SK-N-SH (cell line): ENCODE measurements at regions of chr11 and their contacts with region 1.

Region 1: GRCh38 chr11:25981998-25982397 is 349.9 kb upstream of the ANO3 start:
- DNase-seq: peak; percentile 30
- H3K4me3 ChIP-seq: no peak overlapping the region
- H3K27ac ChIP-seq: no peak overlapping the region
- H3K4me1 ChIP-seq: no peaks in the 10 kb centered on the region; a peak in 1 of 4 replicates
- H3K27me3 ChIP-seq: no peaks in the 10 kb centered on the region
- CTCF ChIP-seq: peak; percentile 73
- EP300 ChIP-seq: no peak
- RAD21 ChIP-seq: peak; percentile 96

Region 2: DNA sequence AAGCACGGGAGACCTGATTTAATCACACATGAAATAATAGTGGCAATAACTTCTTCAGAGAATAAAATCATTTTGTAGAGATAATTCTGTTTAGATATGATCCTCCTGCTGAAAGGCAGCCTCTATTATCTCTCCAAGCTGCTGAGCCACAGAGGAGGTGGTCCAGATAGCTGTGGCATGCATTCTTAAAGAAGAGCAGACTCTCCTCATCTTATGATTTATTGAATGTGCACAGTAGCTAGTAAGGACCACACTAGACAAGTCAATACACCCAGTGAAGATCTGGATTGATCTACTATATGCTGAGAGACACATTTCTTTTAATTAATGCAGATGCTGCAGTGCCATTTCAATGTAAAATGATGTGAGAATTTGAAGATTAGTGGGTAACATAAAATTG is 203.0 kb before region 1 on chr11:
- CTCF ChIA-PET with region 1: no interaction called
- POLR2A ChIA-PET with region 1: no interaction called
- DNase-seq: no peak
- H3K4me3 ChIP-seq: no peak overlapping the region
- H3K27ac ChIP-seq: no peak overlapping the region
- H3K4me1 ChIP-seq: no peaks in the 10 kb centered on the region; a peak in 1 of 4 replicates
- H3K27me3 ChIP-seq: no peaks in the 10 kb centered on the region
- CTCF ChIP-seq: no peak
- EP300 ChIP-seq: no peak
- RAD21 ChIP-seq: no peak

Region 3: DNA sequence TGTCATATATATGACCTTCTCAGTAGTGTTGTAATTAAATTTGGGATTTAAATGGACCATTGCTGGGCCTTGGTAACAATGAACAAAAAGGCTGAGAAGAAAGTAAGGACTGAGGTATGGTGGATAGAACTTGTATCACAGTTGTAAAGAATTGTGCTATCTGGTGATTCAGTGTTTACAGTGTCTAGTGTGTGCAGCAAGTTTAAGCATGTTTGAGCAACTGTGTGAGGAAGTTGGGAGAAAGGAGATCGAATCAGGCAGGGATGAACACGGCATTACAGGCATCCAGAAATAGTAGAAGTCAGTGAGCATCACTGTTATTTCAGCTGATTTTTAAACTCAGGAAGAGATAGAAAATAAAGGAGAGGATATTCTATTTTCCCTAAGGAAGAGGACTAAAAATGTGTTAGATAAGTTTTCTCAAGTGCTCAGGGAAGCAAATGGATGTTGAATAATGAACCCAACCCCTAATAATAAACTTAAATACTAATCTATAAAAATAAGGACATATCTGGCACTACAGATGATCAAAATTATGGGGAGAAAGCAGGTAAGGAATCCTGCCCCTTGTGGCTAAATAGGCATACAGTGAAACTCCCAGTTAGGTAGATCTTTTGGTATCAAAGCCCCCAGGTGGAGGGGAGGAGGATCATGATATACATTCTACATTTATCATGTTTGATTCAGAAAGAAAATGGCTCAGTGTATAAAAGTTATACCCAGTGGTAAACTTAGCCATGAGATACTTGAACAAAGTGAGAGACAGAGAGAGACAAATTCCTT is 11.1 kb before region 1 on chr11:
- CTCF ChIA-PET with region 1: interaction called, 11 read pairs
- POLR2A ChIA-PET with region 1: no interaction called
- DNase-seq: no peak
- H3K4me3 ChIP-seq: no peak overlapping the region
- H3K27ac ChIP-seq: no peak overlapping the region
- H3K4me1 ChIP-seq: no peaks in the 10 kb centered on the region
- H3K27me3 ChIP-seq: no peaks in the 10 kb centered on the region
- CTCF ChIP-seq: peak; percentile 47
- EP300 ChIP-seq: no peak
- RAD21 ChIP-seq: no peak

Region 4: DNA sequence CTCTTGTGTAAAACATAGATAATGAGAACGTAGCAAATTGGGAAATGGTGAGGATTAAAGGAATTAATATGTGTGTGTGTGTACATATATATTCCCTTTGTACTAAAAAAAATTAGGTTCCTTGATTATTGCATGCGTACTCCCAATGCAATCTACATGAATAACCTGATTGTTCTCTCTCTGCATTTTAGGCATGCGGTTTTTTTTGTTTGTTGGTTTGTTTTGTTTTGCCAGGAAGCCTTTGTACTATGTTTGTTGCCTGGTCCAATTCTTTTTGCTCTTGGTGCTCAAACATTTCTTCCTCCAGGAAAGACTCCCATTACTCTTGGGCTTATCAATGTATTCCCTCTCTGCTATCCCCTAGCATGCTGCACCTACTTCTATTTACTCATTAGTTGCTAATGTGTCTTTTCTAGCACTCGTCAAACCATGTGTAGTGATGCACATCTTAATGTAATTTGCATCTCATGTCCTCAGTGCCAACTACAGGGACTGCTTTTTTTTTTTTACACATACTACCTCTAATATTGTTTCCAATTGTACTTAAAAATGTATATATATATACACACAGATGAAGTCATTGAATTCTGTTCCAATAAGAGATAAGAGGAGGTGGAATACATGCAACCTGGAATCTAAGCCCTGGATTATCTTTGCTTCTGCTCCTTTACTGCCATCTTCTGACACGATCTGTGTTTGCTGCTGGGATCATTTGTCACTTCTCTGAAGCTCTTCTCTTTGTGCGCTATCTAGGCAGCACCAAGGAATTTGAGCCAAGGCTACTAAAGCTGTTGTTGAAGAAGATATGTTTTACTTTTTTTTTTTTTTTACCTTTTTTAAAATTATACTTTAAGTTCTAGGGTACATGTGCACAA is 152.7 kb after region 1 on chr11:
- CTCF ChIA-PET with region 1: interaction called, 42 read pairs
- POLR2A ChIA-PET with region 1: no interaction called
- DNase-seq: peak; percentile 9
- H3K4me3 ChIP-seq: no peak overlapping the region
- H3K27ac ChIP-seq: no peak overlapping the region
- H3K4me1 ChIP-seq: no peaks in the 10 kb centered on the region
- H3K27me3 ChIP-seq: no peaks in the 10 kb centered on the region
- CTCF ChIP-seq: peak; percentile 54
- EP300 ChIP-seq: no peak
- RAD21 ChIP-seq: peak; percentile 79

Region 5: DNA sequence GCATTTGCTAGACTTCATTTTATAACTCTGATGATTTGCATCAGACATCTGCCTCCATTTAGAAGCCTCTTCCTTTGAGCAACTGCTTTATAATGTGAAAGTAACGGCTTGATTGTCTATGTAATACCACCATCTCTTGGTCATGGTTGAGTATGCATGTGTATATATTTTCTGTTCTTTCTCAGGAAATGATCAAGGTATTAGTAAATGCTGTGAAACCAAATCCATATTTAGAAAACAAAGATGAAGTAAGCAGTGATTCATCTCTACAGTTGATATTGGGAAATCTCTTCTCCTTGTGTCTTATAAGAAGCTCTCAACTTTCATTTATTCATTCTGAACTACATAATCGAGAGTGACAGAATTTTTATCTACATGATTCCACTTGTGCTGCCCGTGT is 245.3 kb after region 1 on chr11:
- CTCF ChIA-PET with region 1: interaction called, 24 read pairs
- POLR2A ChIA-PET with region 1: no interaction called
- DNase-seq: peak; percentile 37
- H3K4me3 ChIP-seq: no peak overlapping the region
- H3K27ac ChIP-seq: peak overlapping the region in 1 of 2 experiments; percentile 99; a peak in 3 of 4 replicates
- H3K4me1 ChIP-seq: peaks cover 0 to 20% of the 10 kb centered on the region in 2 experiments; a peak in 3 of 4 replicates
- H3K27me3 ChIP-seq: no peaks in the 10 kb centered on the region
- CTCF ChIP-seq: peak; percentile 78
- EP300 ChIP-seq: peak in 1 of 2 experiments; percentile 83; a peak in 2 of 4 replicates
- RAD21 ChIP-seq: peak; percentile 91

Region 6: GRCh38 chr11:26268980-26269660 is 287.1 kb after region 1 on chr11:
- CTCF ChIA-PET with region 1: interaction called, 15 read pairs
- POLR2A ChIA-PET with region 1: no interaction called
- DNase-seq: no peak
- H3K4me3 ChIP-seq: no peak overlapping the region
- H3K27ac ChIP-seq: no peak overlapping the region
- H3K4me1 ChIP-seq: no peaks in the 10 kb centered on the region
- H3K27me3 ChIP-seq: no peaks in the 10 kb centered on the region
- CTCF ChIP-seq: no peak
- EP300 ChIP-seq: no peak
- RAD21 ChIP-seq: no peak

Region 7: DNA sequence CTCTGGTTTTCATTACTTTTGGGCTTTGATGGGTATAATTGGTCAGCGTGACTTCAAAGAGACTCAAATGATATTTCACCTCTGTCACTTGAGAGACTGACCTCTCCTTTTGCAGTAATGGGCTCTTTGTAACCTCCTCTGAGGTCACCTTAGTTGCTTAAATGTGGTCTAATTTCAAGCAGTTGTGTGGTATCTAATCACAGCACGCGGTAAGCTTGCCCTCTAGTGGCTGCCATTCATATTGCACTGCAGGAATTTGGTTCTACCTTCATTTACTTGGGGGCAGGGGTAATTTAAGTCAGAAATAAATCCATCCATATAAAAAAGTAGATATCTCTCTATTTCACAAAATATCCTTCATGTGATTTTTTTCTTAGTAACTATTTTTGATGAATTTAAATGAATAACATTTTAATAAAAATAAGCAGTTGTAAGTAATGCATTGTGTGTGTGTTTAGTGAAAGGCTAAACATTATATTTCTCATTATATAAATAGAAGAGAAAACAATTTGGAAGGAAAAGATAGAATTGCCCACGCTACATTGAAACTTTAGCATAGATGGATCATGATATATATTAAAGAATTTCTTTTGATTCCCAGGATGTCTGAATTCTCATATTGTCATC is 294.9 kb after region 1 on chr11:
- CTCF ChIA-PET with region 1: interaction called, 12 read pairs
- POLR2A ChIA-PET with region 1: no interaction called
- DNase-seq: peak; percentile 43
- H3K4me3 ChIP-seq: peak overlapping the region in 1 of 2 experiments; percentile 18; a peak in 1 of 4 replicates
- H3K27ac ChIP-seq: no peak overlapping the region; a peak in 1 of 4 replicates
- H3K4me1 ChIP-seq: no peaks in the 10 kb centered on the region
- H3K27me3 ChIP-seq: no peaks in the 10 kb centered on the region
- CTCF ChIP-seq: peak; percentile 99
- EP300 ChIP-seq: no peak
- RAD21 ChIP-seq: peak; percentile 97

Region 8: DNA sequence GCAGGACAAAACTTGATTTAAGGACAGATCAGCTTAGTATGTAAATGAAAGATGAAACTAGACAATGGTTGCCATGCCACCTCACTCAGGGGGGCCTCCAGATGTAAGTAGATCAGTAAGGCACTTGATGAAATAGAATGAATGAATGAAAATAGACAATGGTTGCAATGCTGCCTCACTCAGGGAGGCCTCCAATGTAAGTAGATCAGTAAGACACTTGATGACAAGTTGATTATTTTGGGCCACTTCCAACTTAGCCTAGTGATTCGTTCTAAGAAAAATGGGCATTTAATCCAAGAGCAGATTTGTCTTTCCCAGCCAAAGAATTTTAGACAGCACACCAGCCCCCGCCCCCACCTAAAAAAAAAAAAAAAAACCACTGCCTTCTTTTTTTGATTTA is 759.0 kb after region 1 on chr11:
- CTCF ChIA-PET with region 1: no interaction called
- POLR2A ChIA-PET with region 1: no interaction called
- DNase-seq: no peak
- H3K4me3 ChIP-seq: no peak overlapping the region
- H3K27ac ChIP-seq: no peak overlapping the region
- H3K4me1 ChIP-seq: no peaks in the 10 kb centered on the region
- H3K27me3 ChIP-seq: no peaks in the 10 kb centered on the region
- CTCF ChIP-seq: no peak
- EP300 ChIP-seq: no peak
- RAD21 ChIP-seq: no peak